ENCODE measurements at regions of chr3 and their contacts with region 1.

Region 1: DNA sequence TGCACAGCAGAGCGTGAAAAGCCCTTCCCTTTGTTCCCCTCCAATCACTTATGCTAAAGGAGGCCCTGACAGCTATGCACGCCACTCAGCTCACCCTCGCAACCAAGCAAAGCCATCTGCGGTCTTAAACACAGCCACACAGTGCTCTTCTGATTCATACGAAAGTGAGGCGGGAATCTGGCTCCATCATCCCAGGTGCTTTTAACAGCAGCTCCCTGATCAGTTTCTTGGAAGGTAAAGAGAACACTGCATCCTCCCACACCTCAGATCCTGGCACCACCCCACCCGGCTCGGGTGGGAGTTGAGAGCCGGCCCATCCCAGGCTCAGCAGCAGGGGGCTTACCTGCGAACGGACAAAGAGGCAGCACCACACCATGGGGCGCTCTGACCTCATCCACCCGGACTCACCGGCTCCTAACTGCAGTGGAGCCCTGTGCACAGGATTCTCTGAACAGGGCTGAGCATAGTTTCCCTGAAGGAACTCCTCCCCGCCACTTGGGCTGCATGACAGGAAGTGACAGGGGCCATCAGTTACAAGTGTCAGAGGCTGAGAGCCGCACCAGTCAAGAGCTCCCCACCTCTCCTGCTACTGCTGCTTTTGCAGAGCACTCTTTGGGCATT is 114.3 kb upstream of the ARHGEF3 start:
- DNase-seq: no peak
- H3K4me3 ChIP-seq: peak overlapping the region in 1 of 2 donors; percentile 3
- H3K27ac ChIP-seq: no peak overlapping the region
- H3K4me1 ChIP-seq: no peaks in the 10 kb centered on the region
- H3K27me3 ChIP-seq: no peaks in the 10 kb centered on the region
- CTCF ChIP-seq: no peak
- POLR2A ChIP-seq: no peak

Region 2: GRCh38 chr3:56801662-56802377 is 114.3 kb before region 1 on chr3 and contains the start of gene ARHGEF3:
- intact Hi-C with region 1: loop called (anchors 5 kb)
- DNase-seq: peak; percentile 82
- H3K4me3 ChIP-seq: peak within 1 kb of the TSS; percentile 59 to 69
- H3K27ac ChIP-seq: peak within 1 kb of the TSS; percentile 47 to 55
- H3K4me1 ChIP-seq: no peaks in the 10 kb centered on the region
- H3K27me3 ChIP-seq: no peaks in the 10 kb centered on the region
- CTCF ChIP-seq: peak in 2 of 4 experiments; percentile 30 to 33
- POLR2A ChIP-seq: peak; percentile 89
- total RNA-seq, gene ARHGEF3: 21.6 to 59.4 TPM

Region 3: GRCh38 chr3:57007513-57008460 is 91.7 kb after region 1 on chr3:
- intact Hi-C with region 1: no loop called
- DNase-seq: peak; percentile 64
- H3K4me3 ChIP-seq: no peak overlapping the region
- H3K27ac ChIP-seq: peak overlapping the region; percentile 79 to 91
- H3K4me1 ChIP-seq: peaks cover 39% of the 10 kb centered on the region
- H3K27me3 ChIP-seq: no peaks in the 10 kb centered on the region
- CTCF ChIP-seq: no peak
- POLR2A ChIP-seq: no peak

Region 4: DNA sequence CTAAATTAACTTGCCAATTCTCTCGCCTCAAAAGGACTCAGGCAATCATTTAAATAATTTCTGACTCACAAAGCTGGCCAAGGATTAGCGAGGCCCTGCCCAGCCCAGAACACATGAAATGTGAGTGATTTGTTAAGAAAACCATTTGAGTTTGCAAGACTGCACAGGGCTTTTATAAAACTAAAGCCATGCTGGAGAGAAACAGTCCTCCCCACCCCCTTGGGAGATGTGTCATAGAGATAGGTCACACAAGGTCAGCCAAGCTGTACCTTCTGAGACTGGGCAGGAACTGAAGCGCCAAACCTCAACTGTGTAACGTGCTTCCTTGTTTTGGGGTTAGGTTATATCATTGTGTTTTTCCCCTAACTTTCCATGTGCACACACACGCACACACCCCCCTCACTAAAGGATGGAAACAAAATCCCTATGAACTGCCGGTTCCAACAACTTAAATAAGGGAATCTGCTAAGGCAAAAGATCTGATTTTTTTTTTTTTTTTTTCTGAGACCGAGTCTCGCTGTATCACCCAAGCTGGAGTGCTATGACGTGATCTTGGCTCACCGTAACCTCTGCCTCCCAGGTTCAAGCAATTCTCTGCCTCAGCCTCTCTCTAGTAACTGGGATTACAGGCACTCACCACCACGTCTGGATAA is 152.5 kb after region 1 on chr3:
- intact Hi-C with region 1: no loop called
- DNase-seq: no peak
- H3K4me3 ChIP-seq: no peak overlapping the region
- H3K27ac ChIP-seq: no peak overlapping the region
- H3K4me1 ChIP-seq: peaks cover 3% of the 10 kb centered on the region
- H3K27me3 ChIP-seq: no peaks in the 10 kb centered on the region
- CTCF ChIP-seq: no peak
- POLR2A ChIP-seq: no peak

Measured in prostate gland (tissue), 2 donors.